CD4-positive, alpha-beta memory T cell (primary cell): ENCODE measurements at regions of chr1 and their contacts with region 1.

Region 1: DNA sequence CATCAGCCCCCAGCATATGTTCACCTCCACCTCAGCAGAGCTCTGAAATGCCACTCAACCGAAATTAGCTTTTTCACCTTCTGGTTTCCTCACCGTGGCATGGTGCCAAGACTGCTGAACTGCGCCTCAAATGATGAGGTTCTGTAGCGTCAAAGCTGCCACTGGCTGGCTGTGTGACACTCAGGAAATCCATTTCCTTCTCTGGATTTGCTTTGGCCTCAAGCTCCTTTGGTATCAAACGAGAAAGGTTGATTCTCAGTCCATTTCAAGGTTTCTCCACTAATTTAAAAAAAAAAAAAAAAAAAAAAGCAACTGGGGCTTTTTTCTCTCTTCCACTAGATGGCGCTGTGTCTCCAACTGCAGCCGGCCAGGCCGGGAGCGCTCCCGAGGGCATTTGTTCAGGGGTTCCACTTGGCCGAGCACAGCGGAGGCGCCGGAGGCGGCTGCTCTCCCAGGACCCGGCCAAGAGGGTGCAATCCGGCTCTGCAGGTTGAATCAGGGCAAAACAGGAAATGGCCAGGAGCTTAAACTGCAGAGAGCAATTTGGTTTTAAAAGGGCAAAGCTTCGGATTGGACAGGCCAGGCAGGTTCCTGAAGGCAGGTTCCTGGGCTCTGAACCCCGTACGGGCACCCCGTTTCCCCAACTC is 26.5 kb upstream of the PLA2G2C start:
- DNase-seq: peak; percentile 50 to 64 (median 52)
- H3K4me3 ChIP-seq: no peak overlapping the region
- H3K4me3 Mint-ChIP-seq: peak overlapping the region in 6 of 8 donors; percentile 40 to 76 (median 67)
- H3K27ac ChIP-seq: no peak overlapping the region
- H3K27ac Mint-ChIP-seq: peak overlapping the region in 2 of 7 donors; percentile 10 to 16
- H3K4me1 ChIP-seq: peaks cover 9% of the 10 kb centered on the region
- H3K4me1 Mint-ChIP-seq: peaks cover 2 to 8% (median 3%) of the 10 kb centered on the region in 4 donors
- H3K27me3 ChIP-seq: peaks cover 21% of the 10 kb centered on the region
- H3K27me3 Mint-ChIP-seq: peaks cover 24 to 36% of the 10 kb centered on the region in 2 donors

Region 2: DNA sequence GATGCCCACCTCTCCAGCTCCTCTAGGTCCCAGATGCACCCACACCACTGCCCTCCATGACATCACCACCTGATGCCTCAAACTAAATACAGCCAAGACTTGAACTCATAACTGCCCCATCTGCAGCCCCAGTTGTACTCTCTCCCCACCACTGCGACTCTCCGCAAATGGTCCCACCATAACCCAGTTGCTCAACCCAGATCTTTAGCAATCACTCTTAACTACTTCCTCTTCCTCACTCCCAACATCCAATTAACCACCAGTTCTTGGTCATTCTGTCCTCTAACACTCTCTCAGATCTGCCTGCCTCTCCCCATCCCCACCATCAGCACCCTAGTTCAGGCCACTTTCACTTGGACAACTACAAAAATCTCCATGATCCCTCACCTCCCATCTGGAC is 10.3 kb after region 1 on chr1:
- CTCF ChIA-PET with region 1: interaction called, 13 read pairs
- POLR2A ChIA-PET with region 1: no interaction called
- intact Hi-C with region 1: no loop called
- DNase-seq: no peak
- H3K4me3 ChIP-seq: no peak overlapping the region
- H3K4me3 Mint-ChIP-seq: no peak overlapping the region
- H3K27ac ChIP-seq: no peak overlapping the region
- H3K27ac Mint-ChIP-seq: no peak overlapping the region
- H3K4me1 ChIP-seq: no peaks in the 10 kb centered on the region
- H3K4me1 Mint-ChIP-seq: no peaks in the 10 kb centered on the region
- H3K27me3 ChIP-seq: no peaks in the 10 kb centered on the region
- H3K27me3 Mint-ChIP-seq: peaks cover 28 to 48% of the 10 kb centered on the region in 2 donors

Region 3: DNA sequence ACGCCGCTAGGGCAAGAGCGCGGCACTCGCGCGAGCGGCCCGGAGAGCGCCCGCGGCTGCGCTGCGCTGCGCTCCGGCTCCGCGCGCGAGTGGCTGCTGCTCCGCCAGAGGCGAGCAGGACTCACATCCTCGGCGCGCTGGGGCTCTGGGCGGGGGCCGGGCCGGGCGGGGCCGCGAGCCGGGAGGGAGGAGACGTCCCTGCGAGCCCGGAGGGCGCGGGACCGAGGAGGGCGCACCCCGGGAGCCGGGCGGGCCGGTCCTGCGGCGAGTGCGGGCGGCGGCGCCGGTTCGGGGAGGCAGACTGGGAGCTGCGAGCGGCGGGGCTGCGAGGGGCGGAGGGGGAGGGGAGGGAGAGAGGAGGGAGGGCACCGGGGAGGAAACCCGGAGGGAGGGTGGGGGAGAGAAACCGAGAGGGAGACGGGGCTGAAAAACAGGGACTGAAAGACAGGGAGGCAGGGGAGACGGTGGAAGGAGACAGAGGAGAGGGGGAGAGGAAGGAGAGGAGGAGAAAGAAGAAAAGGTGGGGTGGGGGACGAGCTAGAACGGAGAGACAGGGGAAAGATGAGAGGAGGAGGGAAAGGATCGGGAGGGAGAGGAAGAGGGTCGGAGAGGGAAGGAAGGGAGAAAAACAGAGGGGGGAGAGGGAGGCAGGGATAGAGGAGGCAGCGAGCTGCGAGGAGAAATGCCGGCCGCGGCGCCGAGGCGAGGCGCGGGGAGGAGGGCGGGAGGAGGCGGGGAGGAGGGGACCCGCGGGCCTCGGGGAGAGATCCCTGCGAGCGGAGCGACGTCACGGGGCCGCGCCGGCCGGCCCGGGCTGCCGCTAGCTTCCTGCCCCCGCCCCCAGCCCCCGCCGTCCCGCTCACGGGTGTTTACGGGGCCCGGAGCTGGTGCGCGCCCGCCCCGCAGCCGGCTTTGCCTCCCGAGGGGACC is 273.0 kb after region 1 on chr1 and contains the start of gene CAMK2N1:
- CTCF ChIA-PET with region 1: interaction called, 80 read pairs
- POLR2A ChIA-PET with region 1: interaction called, 5 read pairs
- intact Hi-C with region 1: no loop called
- DNase-seq: peak; percentile 49 to 64 (median 54)
- H3K4me3 ChIP-seq: peak within 1 kb of the TSS; percentile 69 to 73
- H3K4me3 Mint-ChIP-seq: peak within 1 kb of the TSS; percentile 85 to 92 (median 89)
- H3K27ac ChIP-seq: no peak within 1 kb of the TSS
- H3K27ac Mint-ChIP-seq: peak within 1 kb of the TSS in 6 of 7 donors; percentile 41 to 90 (median 72)
- H3K4me1 ChIP-seq: peaks cover 24% of the 10 kb centered on the region
- H3K4me1 Mint-ChIP-seq: peaks cover 11 to 22% (median 16%) of the 10 kb centered on the region in 4 donors
- H3K27me3 ChIP-seq: peaks cover 15% of the 10 kb centered on the region
- H3K27me3 Mint-ChIP-seq: peaks cover 20 to 24% of the 10 kb centered on the region in 2 donors
- total RNA-seq, gene CAMK2N1: 5.5 to 6.5 TPM

Region 4: DNA sequence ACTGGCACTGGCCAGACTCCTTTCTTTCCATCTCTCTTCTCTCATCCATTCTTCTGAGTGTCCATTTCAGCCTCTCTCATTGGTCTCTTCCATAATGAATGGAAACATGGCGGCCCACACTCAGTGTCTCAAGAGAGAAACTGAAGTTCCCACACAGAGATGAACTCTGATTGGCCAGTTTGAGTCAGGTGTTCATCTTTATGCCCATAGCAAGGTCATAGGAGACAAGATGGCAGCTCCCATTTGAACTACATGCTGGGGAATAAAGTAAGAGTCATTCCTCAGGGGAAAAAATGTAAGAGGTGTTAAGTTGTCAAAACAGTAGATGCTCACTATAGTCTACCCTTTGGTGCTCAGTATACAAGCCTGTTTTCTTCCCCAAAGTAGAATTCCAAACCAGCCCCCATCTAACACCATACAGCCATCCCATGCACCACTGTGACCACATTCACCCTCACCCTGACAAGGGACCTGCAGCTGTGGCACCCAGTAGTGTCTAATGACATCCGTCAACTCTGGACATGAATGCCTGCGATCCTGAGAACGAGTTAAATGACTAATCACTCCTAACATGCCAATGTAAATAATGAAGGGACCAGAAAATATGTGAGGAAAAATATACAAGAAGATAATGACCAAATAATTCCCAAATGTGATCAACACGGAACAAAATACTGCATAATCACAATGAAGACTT is 388.5 kb after region 1 on chr1:
- CTCF ChIA-PET with region 1: no interaction called
- POLR2A ChIA-PET with region 1: no interaction called
- intact Hi-C with region 1: no loop called
- DNase-seq: no peak
- H3K4me3 ChIP-seq: no peak overlapping the region
- H3K4me3 Mint-ChIP-seq: no peak overlapping the region
- H3K27ac ChIP-seq: no peak overlapping the region
- H3K27ac Mint-ChIP-seq: no peak overlapping the region
- H3K4me1 ChIP-seq: no peaks in the 10 kb centered on the region
- H3K4me1 Mint-ChIP-seq: no peaks in the 10 kb centered on the region
- H3K27me3 ChIP-seq: no peaks in the 10 kb centered on the region
- H3K27me3 Mint-ChIP-seq: peaks cover 2 to 3% of the 10 kb centered on the region in 2 donors

Region 5: DNA sequence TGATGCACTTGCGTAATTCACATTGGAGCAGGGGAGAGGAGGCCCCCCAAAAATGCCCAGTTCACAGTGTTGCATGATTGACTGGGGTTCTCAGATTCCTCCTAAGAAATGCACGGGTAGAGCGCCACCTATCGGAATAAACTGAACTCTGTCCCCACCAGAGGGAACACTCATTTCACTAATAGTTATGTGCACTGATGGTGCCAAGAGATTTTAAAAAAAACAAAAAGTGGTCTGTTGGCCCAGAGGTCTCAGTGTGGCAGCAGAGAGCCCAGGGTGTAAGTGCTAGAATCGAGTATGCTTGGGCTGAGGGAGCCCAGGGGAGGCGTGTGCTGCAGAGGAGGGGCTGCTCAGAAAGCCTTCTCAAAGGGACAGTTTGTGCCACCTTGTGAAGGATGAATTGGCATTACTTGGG is 427.4 kb after region 1 on chr1:
- CTCF ChIA-PET with region 1: no interaction called
- POLR2A ChIA-PET with region 1: no interaction called
- intact Hi-C with region 1: loop called (anchors 5 kb)
- DNase-seq: peak; percentile 46 to 58 (median 54)
- H3K4me3 ChIP-seq: no peak overlapping the region
- H3K4me3 Mint-ChIP-seq: peak overlapping the region in 1 of 8 donors; percentile 21
- H3K27ac ChIP-seq: no peak overlapping the region
- H3K27ac Mint-ChIP-seq: peak overlapping the region in 1 of 7 donors; percentile 31
- H3K4me1 ChIP-seq: no peaks in the 10 kb centered on the region
- H3K4me1 Mint-ChIP-seq: peaks cover 0 to 6% (median 5%) of the 10 kb centered on the region in 4 donors
- H3K27me3 ChIP-seq: no peaks in the 10 kb centered on the region
- H3K27me3 Mint-ChIP-seq: no peaks in the 10 kb centered on the region